ENCODE measurements at regions of chr14 and their contacts with region 1.

Region 1: GRCh38 chr14:61461808-61462275 is 140.5 kb downstream of the PRKCH start:
- DNase-seq: no peak
- ATAC-seq: peak; percentile 25 to 34
- H3K4me3 ChIP-seq: no peak overlapping the region
- H3K27ac ChIP-seq: no peak overlapping the region
- H3K4me1 ChIP-seq: peaks cover 3% of the 10 kb centered on the region
- H3K27me3 ChIP-seq: no peaks in the 10 kb centered on the region

Region 2: GRCh38 chr14:61269321-61270083 is 192.3 kb before region 1 on chr14:
- intact Hi-C with region 1: no loop called
- DNase-seq: peak; percentile 66 to 87 (median 71)
- ATAC-seq: peak; percentile 78 to 79
- H3K4me3 ChIP-seq: peak overlapping the region; percentile 17
- H3K27ac ChIP-seq: no peak overlapping the region
- H3K4me1 ChIP-seq: no peaks in the 10 kb centered on the region
- H3K27me3 ChIP-seq: no peaks in the 10 kb centered on the region

Region 3: GRCh38 chr14:61525293-61526011 is 63.6 kb after region 1 on chr14:
- intact Hi-C with region 1: no loop called
- DNase-seq: peak; percentile 69 to 89 (median 84)
- ATAC-seq: peak; percentile 78 to 90
- H3K4me3 ChIP-seq: no peak overlapping the region
- H3K27ac ChIP-seq: peak overlapping the region; percentile 98
- H3K4me1 ChIP-seq: peaks cover 23% of the 10 kb centered on the region
- H3K27me3 ChIP-seq: no peaks in the 10 kb centered on the region

Region 4: DNA sequence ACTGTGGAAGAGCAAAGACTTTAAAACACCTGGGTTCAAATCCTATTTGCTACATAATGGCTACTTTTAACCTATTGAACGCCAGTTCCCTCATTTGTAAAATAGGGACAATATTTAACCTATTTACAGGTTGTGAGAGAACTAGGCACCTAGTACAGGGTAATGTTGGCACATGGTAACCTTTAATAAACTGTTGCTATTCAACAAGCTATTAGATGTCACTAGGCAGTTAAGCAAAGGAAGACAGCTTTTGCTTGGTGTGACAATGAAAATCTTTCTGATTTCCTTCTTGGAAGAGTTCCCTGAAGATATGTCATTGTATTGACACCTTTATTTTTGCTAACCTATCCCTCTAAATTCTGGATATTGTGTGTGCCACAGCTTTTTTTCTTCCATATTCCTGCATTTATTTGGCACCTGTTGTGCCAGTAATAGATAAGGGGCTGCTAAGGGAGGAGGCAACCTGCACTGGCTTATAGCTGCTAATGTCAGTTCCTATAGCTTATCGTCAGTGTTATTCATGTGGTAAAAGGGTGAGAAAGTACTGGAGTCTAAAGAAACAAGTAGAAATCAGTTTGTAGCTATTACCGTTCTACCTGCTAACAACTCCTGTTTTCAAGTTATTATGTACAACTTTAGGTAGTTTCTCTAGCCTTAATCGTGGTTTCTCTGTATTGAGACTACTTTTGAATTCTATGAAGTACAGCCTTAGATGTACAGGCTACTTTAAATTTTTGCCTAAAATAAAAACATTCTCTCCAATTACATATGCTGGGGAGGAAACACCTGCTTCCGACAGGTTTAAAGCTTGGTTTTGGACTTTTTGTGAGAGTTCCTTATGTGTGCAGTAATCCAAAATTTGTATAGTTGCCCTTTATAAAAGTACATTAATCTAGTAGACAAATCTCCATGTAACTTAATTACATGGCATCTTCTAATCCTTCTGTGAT is 257.8 kb after region 1 on chr14:
- intact Hi-C with region 1: loop called in 1 of 4 experiments (anchors 10 kb)
- DNase-seq: no peak
- ATAC-seq: peak in 1 of 2 donors; percentile 26
- H3K4me3 ChIP-seq: no peak overlapping the region
- H3K27ac ChIP-seq: no peak overlapping the region
- H3K4me1 ChIP-seq: peaks cover 4% of the 10 kb centered on the region
- H3K27me3 ChIP-seq: no peaks in the 10 kb centered on the region

Region 5: GRCh38 chr14:61726778-61727658 is 265.2 kb after region 1 on chr14:
- intact Hi-C with region 1: loop called in 3 of 4 experiments (anchors 5 to 10 kb)
- DNase-seq: no peak
- ATAC-seq: no peak
- H3K4me3 ChIP-seq: no peak overlapping the region
- H3K27ac ChIP-seq: no peak overlapping the region
- H3K4me1 ChIP-seq: no peaks in the 10 kb centered on the region
- H3K27me3 ChIP-seq: no peaks in the 10 kb centered on the region

Region 6: GRCh38 chr14:61749867-61750266 is 288.0 kb after region 1 on chr14:
- intact Hi-C with region 1: loop called in 1 of 4 experiments (anchors 10 kb)
- DNase-seq: no peak
- ATAC-seq: peak; percentile 17 to 30
- H3K4me3 ChIP-seq: peak overlapping the region; percentile 86
- H3K27ac ChIP-seq: peak overlapping the region; percentile 54
- H3K4me1 ChIP-seq: no peaks in the 10 kb centered on the region
- H3K27me3 ChIP-seq: no peaks in the 10 kb centered on the region

Region 7: GRCh38 chr14:62126879-62127478 is 665.1 kb after region 1 on chr14:
- intact Hi-C with region 1: loop called in 2 of 4 experiments (anchors 10 kb)
- DNase-seq: no peak
- ATAC-seq: peak; percentile 51 to 64
- H3K4me3 ChIP-seq: no peak overlapping the region
- H3K27ac ChIP-seq: no peak overlapping the region
- H3K4me1 ChIP-seq: no peaks in the 10 kb centered on the region
- H3K27me3 ChIP-seq: peaks cover 2% of the 10 kb centered on the region

Measured in right cardiac atrium (tissue), 5 donors.